K562 (cell line): ENCODE measurements at regions of chr11 and their contacts with region 1.

Region 1: GRCh38 chr11:10573556-10573955 is 5.1 kb upstream of the LYVE1 start:
- DNase-seq: no peak
- ATAC-seq: no peak
- H3K4me3 ChIP-seq: no peak overlapping the region
- H3K27ac ChIP-seq: no peak overlapping the region
- H3K4me1 ChIP-seq: peaks cover 0 to 3% of the 10 kb centered on the region in 2 experiments; a peak in 1 of 5 replicates
- H3K27me3 ChIP-seq: no peaks in the 10 kb centered on the region
- CTCF ChIP-seq: no peak
- EP300 ChIP-seq: no peak
- POLR2A ChIP-seq: no peak
- RAD21 ChIP-seq: no peak

Region 2: GRCh38 chr11:10197091-10197490 is 376.5 kb before region 1 on chr11:
- CTCF ChIA-PET with region 1: no interaction called
- POLR2A ChIA-PET with region 1: no interaction called
- in situ Hi-C with region 1: no loop called
- intact Hi-C with region 1: no loop called
- DNase-seq: no peak
- ATAC-seq: no peak
- H3K4me3 ChIP-seq: no peak overlapping the region
- H3K27ac ChIP-seq: no peak overlapping the region
- H3K4me1 ChIP-seq: no peaks in the 10 kb centered on the region
- H3K27me3 ChIP-seq: no peaks in the 10 kb centered on the region; a peak in 1 of 5 replicates
- CTCF ChIP-seq: no peak
- EP300 ChIP-seq: no peak
- POLR2A ChIP-seq: no peak
- RAD21 ChIP-seq: no peak

Region 3: DNA sequence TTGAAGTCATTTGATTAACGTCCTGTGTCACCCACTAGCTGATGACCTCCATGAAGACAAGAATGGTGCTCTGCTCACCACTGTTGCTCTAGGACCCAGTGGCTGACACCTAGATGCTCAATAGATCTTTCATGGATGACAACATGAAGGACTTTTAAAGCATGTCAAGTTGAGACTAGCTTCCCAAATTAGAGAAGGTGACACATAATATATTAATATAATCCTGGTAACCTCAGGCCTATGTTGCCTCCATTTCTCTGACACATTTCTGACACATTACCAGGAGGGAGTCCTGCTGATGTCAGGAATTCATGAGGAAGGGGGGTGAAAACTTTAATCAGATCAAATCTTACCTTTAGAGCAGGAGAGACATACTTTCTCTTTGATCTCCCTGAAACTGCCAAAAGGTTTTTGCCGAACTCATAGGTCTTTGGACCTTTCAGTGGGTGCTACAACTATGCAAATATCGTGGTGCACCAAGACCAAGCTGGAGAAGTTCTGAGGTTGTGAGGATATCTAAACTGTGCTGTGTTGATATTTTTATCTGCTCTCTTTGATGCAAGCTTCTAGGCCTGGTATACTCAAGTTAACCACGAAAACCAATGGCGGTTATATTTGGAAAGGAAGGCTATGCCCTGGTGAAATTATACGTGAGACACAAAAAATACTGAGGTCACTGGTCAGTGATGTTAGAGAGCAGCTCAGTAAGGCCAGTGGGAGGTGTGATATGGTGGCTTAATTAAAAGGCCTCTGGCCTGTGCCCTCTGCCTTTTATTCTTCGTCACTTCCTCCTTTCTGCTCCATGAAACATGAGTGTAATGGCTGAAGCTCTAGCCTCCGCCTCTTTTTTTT is 131.7 kb before region 1 on chr11:
- CTCF ChIA-PET with region 1: no interaction called
- POLR2A ChIA-PET with region 1: no interaction called
- in situ Hi-C with region 1: no loop called
- intact Hi-C with region 1: no loop called
- DNase-seq: no peak
- ATAC-seq: no peak; the same call in 2 of the 3 replicates
- H3K4me3 ChIP-seq: no peak overlapping the region
- H3K27ac ChIP-seq: peak overlapping the region; percentile 12; the same call in 1 of the 3 replicates
- H3K4me1 ChIP-seq: peaks cover 7 to 14% of the 10 kb centered on the region in 2 experiments
- H3K27me3 ChIP-seq: no peaks in the 10 kb centered on the region
- CTCF ChIP-seq: no peak
- EP300 ChIP-seq: no peak
- POLR2A ChIP-seq: no peak
- RAD21 ChIP-seq: no peak

Region 4: DNA sequence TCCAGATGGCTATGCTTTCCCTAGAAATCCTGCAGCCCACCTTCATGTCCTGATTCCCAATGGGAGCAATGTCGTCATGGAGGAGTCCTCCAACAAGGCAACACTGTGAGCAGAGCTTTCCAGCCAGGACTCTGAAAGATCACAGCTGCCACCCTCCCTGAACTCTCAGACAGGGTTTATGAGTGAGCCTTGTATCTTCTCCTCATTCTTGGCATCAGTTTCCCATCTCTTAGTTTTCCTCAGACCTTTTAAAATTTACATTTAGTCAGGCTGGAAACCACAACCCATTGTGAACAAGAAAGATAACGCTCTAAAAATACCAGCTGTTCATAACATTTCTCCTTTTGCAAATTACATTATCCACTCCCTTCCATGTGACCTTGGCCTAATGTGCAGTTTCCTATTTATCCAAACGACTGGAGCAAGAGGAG is 10.5 kb after region 1 on chr11:
- CTCF ChIA-PET with region 1: no interaction called
- POLR2A ChIA-PET with region 1: interaction called, 11 read pairs
- in situ Hi-C with region 1: no loop called
- intact Hi-C with region 1: no loop called
- DNase-seq: peak in 1 of 4 experiments; percentile 51
- ATAC-seq: no peak
- H3K4me3 ChIP-seq: no peak overlapping the region
- H3K27ac ChIP-seq: peak overlapping the region; percentile 20; the same call in 2 of the 3 replicates
- H3K4me1 ChIP-seq: peaks cover 20 to 77% of the 10 kb centered on the region in 2 experiments
- H3K27me3 ChIP-seq: no peaks in the 10 kb centered on the region
- CTCF ChIP-seq: no peak
- EP300 ChIP-seq: 0 out of 2 replicates have a peak, but pooled peaks have one; percentile 36
- POLR2A ChIP-seq: no peak
- RAD21 ChIP-seq: no peak